A673 (cell line): ENCODE measurements at regions of chr11 and their contacts with region 1.

Region 1: DNA sequence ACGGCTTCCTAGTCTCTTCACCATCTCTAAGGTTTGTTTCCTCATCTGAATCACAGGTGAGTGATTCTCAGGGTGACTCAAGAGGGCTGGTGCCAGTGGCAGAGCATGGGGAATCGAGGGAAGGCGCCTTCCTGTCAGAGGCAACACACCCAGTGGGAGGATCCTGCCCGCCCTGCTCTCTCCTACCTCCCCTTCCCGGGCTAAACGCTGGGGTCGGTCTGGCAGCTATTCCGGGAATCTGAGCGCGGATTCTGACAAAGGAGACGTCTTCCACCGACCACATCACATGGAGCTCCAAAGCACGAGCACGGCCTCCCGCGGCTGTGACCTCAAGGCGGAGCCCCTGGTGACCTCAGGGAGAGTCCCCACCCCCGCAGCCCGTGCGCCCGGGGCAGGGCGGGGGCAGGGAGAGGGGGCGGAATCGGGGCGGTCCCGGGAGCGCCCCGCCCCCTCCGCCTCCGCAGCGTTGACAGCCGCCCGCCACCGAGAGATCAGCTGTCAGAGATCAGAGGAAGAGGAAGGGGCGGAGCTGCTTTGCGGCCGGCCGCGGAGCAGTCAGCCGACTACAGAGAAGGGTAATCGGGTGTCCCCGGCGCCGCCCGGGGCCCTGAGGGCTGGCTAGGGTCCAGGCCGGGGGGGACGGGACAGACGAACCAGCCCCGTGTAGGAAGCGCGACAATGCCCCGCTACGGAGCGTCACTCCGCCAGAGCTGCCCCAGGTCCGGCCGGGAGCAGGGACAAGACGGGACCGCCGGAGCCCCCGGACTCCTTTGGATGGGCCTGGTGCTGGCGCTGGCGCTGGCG is at the start of gene SMPD1:
- DNase-seq: peak; percentile 92
- H3K4me3 ChIP-seq: peak within 1 kb of the TSS; percentile 92
- H3K27ac ChIP-seq: peak within 1 kb of the TSS; percentile 93
- H3K4me1 ChIP-seq: peaks cover 42% of the 10 kb centered on the region
- H3K27me3 ChIP-seq: no peaks in the 10 kb centered on the region
- CTCF ChIP-seq: no peak
- total RNA-seq, gene SMPD1: 126 and 176 TPM in 2 replicates

Region 2: GRCh38 chr11:6251120-6251733 is 138.9 kb before region 1 on chr11:
- CTCF ChIA-PET with region 1: no interaction called
- POLR2A ChIA-PET with region 1: no interaction called
- intact Hi-C with region 1: no loop called
- DNase-seq: peak; percentile 71
- H3K4me3 ChIP-seq: no peak overlapping the region
- H3K27ac ChIP-seq: no peak overlapping the region
- H3K4me1 ChIP-seq: no peaks in the 10 kb centered on the region
- H3K27me3 ChIP-seq: peaks cover 8% of the 10 kb centered on the region
- CTCF ChIP-seq: peak; percentile 78

Region 3: GRCh38 chr11:6473481-6474422 is 83.6 kb after region 1 on chr11 and contains the start of gene TRIM3:
- CTCF ChIA-PET with region 1: interaction called, 3 read pairs
- POLR2A ChIA-PET with region 1: interaction called, 12 read pairs
- intact Hi-C with region 1: no loop called
- DNase-seq: peak; percentile 88
- H3K4me3 ChIP-seq: peak within 1 kb of the TSS; percentile 82
- H3K27ac ChIP-seq: peak within 1 kb of the TSS; percentile 86
- H3K4me1 ChIP-seq: peaks cover 25% of the 10 kb centered on the region
- H3K27me3 ChIP-seq: no peaks in the 10 kb centered on the region
- CTCF ChIP-seq: peak; percentile 46
- total RNA-seq, gene TRIM3: 34.2 and 37.1 TPM in 2 replicates

Region 4: GRCh38 chr11:6612213-6613041 is 222.3 kb after region 1 on chr11 and contains the start of gene TAF10:
- CTCF ChIA-PET with region 1: no interaction called
- POLR2A ChIA-PET with region 1: no interaction called
- intact Hi-C with region 1: loop called (anchors 10 kb)
- DNase-seq: peak; percentile 96
- H3K4me3 ChIP-seq: peak within 1 kb of the TSS; percentile 75
- H3K27ac ChIP-seq: peak within 1 kb of the TSS; percentile 97
- H3K4me1 ChIP-seq: peaks cover 7% of the 10 kb centered on the region
- H3K27me3 ChIP-seq: no peaks in the 10 kb centered on the region
- CTCF ChIP-seq: peak; percentile 40; the same call in 1 of the 2 replicates
- total RNA-seq, gene TAF10: 108 and 112 TPM in 2 replicates

Region 5: GRCh38 chr11:6635082-6635932 is 245.2 kb after region 1 on chr11:
- CTCF ChIA-PET with region 1: no interaction called
- POLR2A ChIA-PET with region 1: no interaction called
- intact Hi-C with region 1: no loop called
- DNase-seq: no peak
- H3K4me3 ChIP-seq: no peak overlapping the region
- H3K27ac ChIP-seq: no peak overlapping the region
- H3K4me1 ChIP-seq: no peaks in the 10 kb centered on the region
- H3K27me3 ChIP-seq: no peaks in the 10 kb centered on the region
- CTCF ChIP-seq: no peak

Region 6: DNA sequence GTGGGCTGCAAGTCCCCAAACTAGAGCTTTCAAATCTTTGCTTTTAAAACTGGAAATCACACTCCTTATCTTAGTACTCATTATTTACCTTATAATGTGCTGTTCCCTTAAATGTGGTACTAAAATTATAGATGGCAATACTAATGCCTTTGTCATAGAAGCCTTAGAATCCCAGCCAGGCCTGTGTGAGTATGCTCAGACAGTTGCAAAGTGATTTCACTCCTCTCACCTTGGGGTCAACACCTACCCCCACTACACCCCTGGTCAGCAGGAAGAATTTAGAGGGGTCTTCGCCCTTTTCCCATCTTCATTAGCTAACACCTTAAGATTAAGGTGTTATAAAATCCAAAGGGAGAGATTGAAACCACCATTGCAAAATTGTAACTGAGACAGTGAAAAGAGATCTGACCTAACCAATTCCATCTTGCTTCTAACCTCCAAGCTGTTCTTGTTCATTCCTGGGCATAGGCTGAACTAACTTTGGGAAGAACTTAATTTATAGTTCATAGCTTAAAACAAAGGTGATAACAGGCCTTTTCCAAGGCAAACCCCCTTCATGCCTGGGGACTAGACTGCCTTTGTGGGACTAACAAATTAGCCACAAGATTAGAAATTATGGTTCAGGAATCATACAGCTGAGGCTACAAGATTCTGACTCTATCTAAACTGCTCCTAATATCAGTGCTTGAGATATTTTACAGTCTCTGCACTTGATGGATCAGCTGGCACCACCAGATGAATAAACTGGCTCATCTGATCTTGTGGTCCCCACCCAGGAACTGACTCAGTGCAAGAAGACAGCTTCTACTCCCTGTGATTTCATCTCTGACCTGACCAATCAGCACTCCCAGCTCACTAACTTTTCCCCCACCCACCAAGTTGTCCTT is 303.5 kb after region 1 on chr11:
- CTCF ChIA-PET with region 1: interaction called, 10 read pairs
- POLR2A ChIA-PET with region 1: no interaction called
- intact Hi-C with region 1: no loop called
- DNase-seq: peak; percentile 87
- H3K4me3 ChIP-seq: no peak overlapping the region
- H3K27ac ChIP-seq: peak overlapping the region; percentile 30
- H3K4me1 ChIP-seq: peaks cover 5% of the 10 kb centered on the region
- H3K27me3 ChIP-seq: no peaks in the 10 kb centered on the region
- CTCF ChIP-seq: no peak

Region 7: GRCh38 chr11:7672960-7673723 is 1283.0 kb after region 1 on chr11 and contains the start of gene CYB5R2:
- CTCF ChIA-PET with region 1: no interaction called
- POLR2A ChIA-PET with region 1: no interaction called
- intact Hi-C with region 1: loop called (anchors 5 kb)
- DNase-seq: no peak
- H3K4me3 ChIP-seq: peak within 1 kb of the TSS; percentile 17
- H3K27ac ChIP-seq: no peak within 1 kb of the TSS
- H3K4me1 ChIP-seq: no peaks in the 10 kb centered on the region
- H3K27me3 ChIP-seq: peaks cover 22% of the 10 kb centered on the region
- CTCF ChIP-seq: no peak
- total RNA-seq, gene CYB5R2: 6.2 and 6.9 TPM in 2 replicates